PC-9 (cell line): ENCODE measurements at regions of chr1 and their contacts with region 1.

Region 1: DNA sequence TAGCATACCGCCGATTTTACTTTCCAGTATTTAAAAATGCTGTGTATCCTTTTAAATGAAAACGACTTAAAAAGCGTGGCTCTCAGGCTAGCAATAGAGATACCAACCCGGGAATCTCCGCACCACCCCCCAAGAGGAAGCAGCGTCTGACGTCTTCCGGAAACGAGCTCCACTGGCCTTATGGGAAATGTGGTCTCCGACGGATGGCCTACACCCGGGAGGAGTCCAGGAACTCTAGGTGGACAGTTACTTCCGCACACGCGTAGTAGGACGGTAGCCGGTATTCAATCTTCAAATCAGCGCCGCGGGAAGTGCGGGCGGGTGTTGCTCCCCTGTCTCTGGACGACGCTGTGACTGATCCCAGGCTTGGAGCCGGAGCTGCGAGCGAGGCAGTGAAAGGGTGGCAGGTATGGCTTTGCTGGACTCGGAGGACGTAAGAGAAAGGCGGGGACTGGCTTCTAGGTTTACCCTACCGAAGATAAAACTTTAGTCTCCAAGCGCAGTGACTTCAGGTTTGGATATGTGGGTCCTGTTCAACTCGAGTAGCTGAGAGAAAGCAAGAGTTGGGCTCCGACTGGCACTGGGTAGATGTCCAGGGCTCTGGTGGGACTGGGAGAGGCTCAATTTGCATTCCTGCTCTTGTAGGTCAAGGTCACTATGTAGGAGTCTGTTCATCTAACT is at the start of gene ZNF684:
- DNase-seq: peak; percentile 89 to 90
- H3K4me3 ChIP-seq: peak within 1 kb of the TSS; percentile 88
- H3K27ac ChIP-seq: peak within 1 kb of the TSS; percentile 41
- H3K4me1 ChIP-seq: peaks cover 13% of the 10 kb centered on the region
- H3K27me3 ChIP-seq: no peaks in the 10 kb centered on the region
- CTCF ChIP-seq: no peak
- total RNA-seq, gene ZNF684: 6.0 and 11.8 TPM in 2 replicates

Region 2: DNA sequence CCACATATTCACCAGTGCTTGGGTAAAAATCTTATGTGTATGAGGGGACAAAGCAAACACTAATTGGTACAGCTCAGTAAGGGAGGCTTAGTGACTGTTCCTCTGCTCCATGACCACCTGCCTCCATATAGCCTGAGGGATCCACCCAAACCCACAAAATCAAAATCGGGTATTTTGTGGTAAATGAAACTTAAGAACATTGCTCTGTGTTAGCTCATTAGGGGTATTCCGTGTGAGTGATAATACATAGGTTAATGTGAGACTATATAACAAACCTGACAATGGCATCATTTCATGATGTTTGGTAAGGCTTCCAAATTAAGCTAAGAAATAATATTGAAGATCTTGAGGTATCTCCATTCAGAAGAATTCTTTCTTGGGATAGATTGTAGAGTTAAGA is 240.2 kb before region 1 on chr1:
- CTCF ChIA-PET with region 1: no interaction called
- POLR2A ChIA-PET with region 1: no interaction called
- intact Hi-C with region 1: no loop called
- DNase-seq: no peak
- H3K4me3 ChIP-seq: no peak overlapping the region
- H3K27ac ChIP-seq: no peak overlapping the region
- H3K4me1 ChIP-seq: no peaks in the 10 kb centered on the region
- H3K27me3 ChIP-seq: no peaks in the 10 kb centered on the region
- CTCF ChIP-seq: no peak

Region 3: DNA sequence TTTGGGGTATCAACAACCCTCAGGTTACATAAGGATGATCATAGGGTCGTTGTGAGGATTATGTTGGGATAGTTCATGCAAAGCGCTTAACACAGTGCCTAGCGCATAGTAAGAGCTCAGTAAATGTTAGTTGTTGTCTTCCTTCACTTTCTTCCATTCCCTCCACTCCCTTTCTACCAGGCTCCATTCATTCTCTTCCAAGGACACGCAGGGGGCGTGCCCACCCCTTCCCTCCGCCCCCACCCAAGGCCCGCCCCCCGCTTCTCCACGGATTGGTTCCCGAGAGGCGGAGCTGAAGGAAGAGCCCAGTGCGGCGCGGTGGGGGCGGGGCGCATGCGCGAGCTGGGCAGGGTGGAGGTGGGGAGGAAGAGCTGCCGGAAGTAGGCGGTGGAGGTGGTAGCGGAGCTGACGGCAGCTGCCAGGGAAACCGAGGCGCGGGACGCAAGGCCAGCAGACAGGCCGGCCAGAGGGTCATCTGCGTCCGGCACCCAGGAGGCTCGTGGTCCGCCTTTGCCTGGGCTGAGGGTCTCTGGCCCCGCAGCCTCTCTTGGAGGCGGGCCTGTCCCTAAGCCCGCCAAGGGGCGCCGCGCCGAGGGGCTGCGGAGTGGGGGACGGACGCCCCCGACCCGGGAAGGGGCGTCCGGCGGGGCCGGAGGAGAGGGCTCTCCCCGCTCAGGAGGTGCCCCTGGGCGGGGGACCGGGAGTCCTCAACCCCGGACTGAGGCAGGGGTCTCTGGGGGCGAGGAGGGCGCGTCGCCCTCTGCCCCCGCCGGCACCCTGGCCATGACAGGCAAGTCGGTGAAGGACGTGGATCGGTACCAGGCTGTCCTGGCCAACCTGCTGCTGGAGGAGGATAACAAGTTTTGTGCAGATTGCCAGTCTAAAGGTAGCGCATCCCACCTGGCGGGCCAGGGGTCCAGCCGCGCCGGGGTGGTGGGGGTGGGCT is 157.9 kb before region 1 on chr1 and contains the start of gene SMAP2:
- CTCF ChIA-PET with region 1: no interaction called
- POLR2A ChIA-PET with region 1: interaction called, 10 read pairs
- intact Hi-C with region 1: no loop called
- DNase-seq: peak; percentile 85 to 98
- H3K4me3 ChIP-seq: peak within 1 kb of the TSS; percentile 94
- H3K27ac ChIP-seq: no peak within 1 kb of the TSS
- H3K4me1 ChIP-seq: peaks cover 17% of the 10 kb centered on the region
- H3K27me3 ChIP-seq: peaks cover 9% of the 10 kb centered on the region; the same call in 1 of the 2 replicates
- CTCF ChIP-seq: no peak
- total RNA-seq, gene SMAP2: 12.9 and 19.7 TPM in 2 replicates

Region 4: DNA sequence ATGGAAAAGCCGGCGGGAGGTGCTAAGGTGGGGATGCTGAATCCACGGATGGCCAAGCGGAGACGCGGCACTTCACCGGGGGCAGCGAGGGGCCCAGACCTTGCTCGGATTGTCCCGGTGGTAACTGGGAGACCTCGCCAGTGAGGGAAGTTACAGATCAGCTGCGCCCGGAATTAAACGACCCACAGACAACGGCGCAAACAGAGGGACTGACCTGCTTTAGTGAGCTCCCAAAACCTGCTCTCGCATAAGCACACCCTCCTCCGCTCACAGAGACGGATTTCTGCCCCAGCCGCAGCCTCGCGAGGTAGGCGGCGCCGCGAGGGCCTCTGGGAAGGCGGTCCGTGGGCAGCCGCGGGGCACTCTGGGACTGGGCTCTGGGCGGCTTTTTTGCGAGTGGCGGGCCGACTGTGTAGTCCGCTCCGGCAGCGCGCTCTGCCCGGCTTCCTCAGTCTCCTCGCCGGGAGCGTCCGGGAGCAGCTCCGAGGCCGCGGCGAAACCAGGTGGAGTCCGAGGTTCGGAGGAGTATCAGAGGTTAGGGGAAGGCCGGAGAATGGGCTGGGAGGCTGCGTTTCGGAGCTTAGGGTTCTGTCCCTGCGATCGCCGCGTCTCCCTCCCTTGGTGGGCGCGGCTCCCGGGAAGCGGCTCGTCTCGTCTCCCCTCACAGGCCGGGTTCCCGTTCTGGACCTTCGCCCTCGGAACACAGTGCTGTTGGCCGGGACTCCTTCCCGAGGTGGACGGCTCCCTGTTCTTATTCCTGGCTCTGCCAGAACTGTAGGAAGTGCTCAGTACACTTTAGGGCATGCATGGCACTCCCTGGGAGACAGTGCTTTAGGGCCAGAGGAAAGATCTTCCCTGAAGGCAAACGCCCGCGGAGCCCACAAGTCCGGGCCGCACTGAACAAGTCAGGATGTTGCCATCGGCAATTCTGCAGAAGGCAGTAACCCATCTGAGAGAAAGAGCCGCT is 22.9 kb before region 1 on chr1 and contains the start of gene EXO5:
- CTCF ChIA-PET with region 1: interaction called, 4 read pairs
- POLR2A ChIA-PET with region 1: no interaction called
- intact Hi-C with region 1: loop called (anchors 1 kb)
- DNase-seq: peak; percentile 68 to 87
- H3K4me3 ChIP-seq: peak within 1 kb of the TSS; percentile 72
- H3K27ac ChIP-seq: peak within 1 kb of the TSS; percentile 44
- H3K4me1 ChIP-seq: peaks cover 15% of the 10 kb centered on the region
- H3K27me3 ChIP-seq: no peaks in the 10 kb centered on the region
- CTCF ChIP-seq: no peak
- total RNA-seq, gene EXO5: 15.4 and 19.0 TPM in 2 replicates

Region 5: DNA sequence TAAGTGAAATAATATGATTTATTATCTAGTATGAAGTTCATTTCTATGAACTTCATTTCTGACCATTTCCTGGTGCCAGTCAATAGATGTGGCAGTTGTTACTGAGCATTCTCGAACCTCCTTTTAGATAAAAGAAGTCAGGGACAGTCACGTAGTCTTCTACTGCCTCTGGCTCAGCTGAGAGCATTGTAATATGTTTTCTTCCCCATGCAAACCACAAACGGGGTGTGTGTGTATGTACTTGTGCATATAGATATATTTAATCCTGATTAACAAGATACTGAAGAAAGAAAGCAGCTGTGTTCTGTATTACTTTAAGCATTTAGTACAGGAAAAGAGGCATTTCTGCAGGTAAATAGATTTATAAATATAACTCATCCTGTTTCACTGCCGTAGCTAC is 21.5 kb after region 1 on chr1:
- CTCF ChIA-PET with region 1: interaction called, 15 read pairs
- POLR2A ChIA-PET with region 1: no interaction called
- intact Hi-C with region 1: no loop called
- DNase-seq: no peak
- H3K4me3 ChIP-seq: no peak overlapping the region
- H3K27ac ChIP-seq: no peak overlapping the region
- H3K4me1 ChIP-seq: no peaks in the 10 kb centered on the region
- H3K27me3 ChIP-seq: no peaks in the 10 kb centered on the region
- CTCF ChIP-seq: no peak